Heart right ventricle (tissue), 16 donors: ENCODE measurements at regions of chr2 and their contacts with region 1.

Region 1: DNA sequence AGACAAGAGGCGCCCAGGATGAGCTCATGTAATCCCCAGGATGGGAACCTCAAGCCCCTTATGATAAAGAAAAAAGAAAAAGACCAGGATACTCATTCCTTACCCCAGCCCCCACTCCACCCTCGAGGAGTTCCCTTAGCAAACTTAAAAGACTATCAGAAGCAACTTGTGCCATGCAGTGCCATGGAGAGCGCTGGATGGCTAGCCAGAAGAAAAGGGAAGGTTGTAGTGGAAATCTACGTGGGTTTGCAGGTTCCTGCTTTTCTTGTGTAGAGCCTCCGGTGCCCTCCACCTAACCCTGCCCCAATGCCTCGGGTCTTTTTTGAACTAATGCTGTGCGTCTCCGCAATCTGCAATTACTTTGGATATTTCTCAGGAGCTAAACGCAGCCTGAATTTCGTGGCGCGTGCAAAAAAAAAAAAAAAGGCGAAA is 16.2 kb upstream of the BCL11A start:
- DNase-seq: no peak
- ATAC-seq: no peak
- H3K4me3 ChIP-seq: peak overlapping the region in 5 of 10 donors; percentile 1 to 33 (median 13)
- H3K27ac ChIP-seq: no peak overlapping the region
- H3K4me1 ChIP-seq: peaks cover 0 to 10% (median 4%) of the 10 kb centered on the region in 9 donors
- H3K27me3 ChIP-seq: peaks cover 0 to 97% (median 86%) of the 10 kb centered on the region in 7 donors
- CTCF ChIP-seq: no peak

Region 2: DNA sequence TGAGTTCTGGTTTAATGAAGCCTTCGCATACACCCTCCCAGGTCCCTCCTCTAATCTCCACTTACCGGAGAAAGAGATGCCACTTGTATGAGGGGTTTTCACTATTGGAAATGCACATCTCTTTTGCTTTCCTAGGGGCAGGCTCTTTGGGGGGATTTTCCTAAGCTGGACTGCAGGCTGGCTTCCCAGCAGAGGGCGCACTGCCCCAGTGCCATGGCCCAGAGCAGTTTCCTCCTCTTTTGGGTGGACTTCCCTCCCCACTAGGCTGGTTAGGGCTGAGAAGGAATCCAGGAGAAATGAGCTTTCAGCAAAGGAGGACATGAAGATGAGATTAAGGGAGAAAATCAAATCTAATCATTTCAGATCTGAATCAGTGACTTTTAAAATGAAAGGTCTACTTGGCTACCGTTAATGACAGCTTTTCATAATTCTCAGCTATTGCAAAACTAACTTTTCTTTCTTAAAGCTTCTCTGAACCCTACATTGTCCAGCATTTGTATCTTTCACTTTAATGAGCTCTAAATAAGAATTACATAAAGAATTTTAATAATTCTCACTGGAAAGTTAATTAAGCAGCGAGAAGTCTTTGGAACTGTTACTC is 1544.4 kb before region 1 on chr2:
- intact Hi-C with region 1: loop called in 1 of 10 experiments (anchors 10 kb)
- DNase-seq: peak in 1 of 2 donors; percentile 17
- ATAC-seq: no peak
- H3K4me3 ChIP-seq: no peak overlapping the region
- H3K27ac ChIP-seq: no peak overlapping the region
- H3K4me1 ChIP-seq: no peaks in the 10 kb centered on the region
- H3K27me3 ChIP-seq: peaks cover 0 to 7% (median 0%) of the 10 kb centered on the region in 7 donors
- CTCF ChIP-seq: peak; percentile 24 to 77 (median 55)

Region 3: GRCh38 chr2:60337140-60337494 is 232.6 kb before region 1 on chr2:
- intact Hi-C with region 1: no loop called
- DNase-seq: peak in 1 of 2 donors; percentile 47
- ATAC-seq: peak in 7 of 8 donors; percentile 47 to 75 (median 69)
- H3K4me3 ChIP-seq: no peak overlapping the region
- H3K27ac ChIP-seq: no peak overlapping the region
- H3K4me1 ChIP-seq: peaks cover 0 to 20% (median 0%) of the 10 kb centered on the region in 9 donors
- H3K27me3 ChIP-seq: no peaks in the 10 kb centered on the region
- CTCF ChIP-seq: peak in 7 of 9 donors; percentile 14 to 49 (median 36)

Region 4: GRCh38 chr2:60641811-60642788 is 72.4 kb after region 1 on chr2:
- intact Hi-C with region 1: no loop called
- DNase-seq: no peak
- ATAC-seq: peak in 2 of 8 donors; percentile 35 to 45
- H3K4me3 ChIP-seq: no peak overlapping the region
- H3K27ac ChIP-seq: no peak overlapping the region
- H3K4me1 ChIP-seq: no peaks in the 10 kb centered on the region
- H3K27me3 ChIP-seq: peaks cover 0 to 10% (median 0%) of the 10 kb centered on the region in 7 donors
- CTCF ChIP-seq: peak; percentile 32 to 79 (median 75)